WTC11 (cell line): ENCODE measurements at regions of chr9 and their contacts with region 1.

Region 1: GRCh38 chr9:114653556-114654159 is 3.9 kb downstream of the TEX53 start:
- DNase-seq: peak; percentile 81
- ATAC-seq: peak; percentile 96
- H3K4me3 Mint-ChIP-seq: no peak overlapping the region
- H3K27ac Mint-ChIP-seq: no peak overlapping the region
- H3K4me1 Mint-ChIP-seq: peaks cover 4% of the 10 kb centered on the region; the same call in 1 of the 2 replicates
- H3K27me3 Mint-ChIP-seq: no peaks in the 10 kb centered on the region; the same call in 1 of the 2 replicates
- CTCF ChIP-seq: peak; percentile 74

Region 2: DNA sequence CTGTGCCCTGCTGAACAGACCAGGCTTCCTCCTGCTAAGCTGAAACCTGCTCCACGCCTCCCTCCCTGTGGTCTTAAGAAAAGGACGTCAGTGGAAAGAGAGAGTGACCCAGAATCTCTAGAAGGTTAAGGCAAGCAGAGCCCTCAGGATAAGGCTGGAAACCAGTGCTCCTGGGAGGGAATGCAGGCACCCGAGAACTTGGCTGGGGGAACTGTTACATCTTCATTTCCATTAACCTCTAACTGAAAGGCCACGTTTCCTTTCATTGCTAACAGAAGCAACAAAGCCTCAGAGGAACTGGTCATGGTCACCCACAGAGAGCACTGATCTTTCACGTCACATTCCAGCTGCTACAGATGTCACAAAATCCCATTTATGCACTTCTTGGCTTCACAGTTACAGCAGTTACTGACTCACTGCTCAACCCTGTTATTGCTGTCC is 239.8 kb before region 1 on chr9:
- CTCF ChIA-PET with region 1: interaction called, 130 read pairs
- POLR2A ChIA-PET with region 1: no interaction called
- DNase-seq: no peak
- ATAC-seq: peak; percentile 46
- H3K4me3 Mint-ChIP-seq: no peak overlapping the region
- H3K27ac Mint-ChIP-seq: no peak overlapping the region
- H3K4me1 Mint-ChIP-seq: peaks cover 27% of the 10 kb centered on the region
- H3K27me3 Mint-ChIP-seq: no peaks in the 10 kb centered on the region
- CTCF ChIP-seq: no peak

Region 3: GRCh38 chr9:114452219-114453165 is 201.2 kb before region 1 on chr9:
- CTCF ChIA-PET with region 1: interaction called, 10 read pairs
- POLR2A ChIA-PET with region 1: no interaction called
- DNase-seq: no peak
- ATAC-seq: peak; percentile 65
- H3K4me3 Mint-ChIP-seq: no peak overlapping the region
- H3K27ac Mint-ChIP-seq: peak overlapping the region; percentile 66
- H3K4me1 Mint-ChIP-seq: peaks cover 21% of the 10 kb centered on the region
- H3K27me3 Mint-ChIP-seq: no peaks in the 10 kb centered on the region
- CTCF ChIP-seq: no peak

Region 4: GRCh38 chr9:114538241-114538640 is 115.4 kb before region 1 on chr9:
- CTCF ChIA-PET with region 1: interaction called, 47 read pairs
- POLR2A ChIA-PET with region 1: interaction called, 4 read pairs
- DNase-seq: peak; percentile 46
- ATAC-seq: peak; percentile 100
- H3K4me3 Mint-ChIP-seq: no peak overlapping the region
- H3K27ac Mint-ChIP-seq: 0 out of 2 replicates have a peak overlapping the region, but pooled peaks have one; percentile 15
- H3K4me1 Mint-ChIP-seq: peaks cover 9% of the 10 kb centered on the region
- H3K27me3 Mint-ChIP-seq: no peaks in the 10 kb centered on the region
- CTCF ChIP-seq: no peak

Region 5: DNA sequence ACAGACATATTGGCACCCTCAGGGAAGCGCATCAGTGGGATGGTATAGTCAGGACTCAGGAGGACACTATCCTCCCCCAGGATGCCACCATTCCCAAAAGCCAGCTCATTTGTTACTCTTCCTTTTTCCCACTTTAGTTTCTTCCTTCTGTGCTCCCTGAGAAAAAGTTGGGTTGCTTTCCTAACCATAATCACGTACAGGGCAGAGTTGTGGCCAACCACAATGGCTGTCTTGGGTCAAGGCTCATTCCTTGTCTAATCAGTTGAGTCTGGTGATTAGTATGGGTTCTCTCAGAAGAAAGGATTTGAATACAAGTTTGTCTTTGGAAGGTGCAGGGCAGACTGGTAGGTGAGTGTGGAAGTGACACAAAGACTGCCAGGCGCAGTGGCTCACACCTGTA is 92.7 kb before region 1 on chr9:
- CTCF ChIA-PET with region 1: no interaction called
- POLR2A ChIA-PET with region 1: no interaction called
- DNase-seq: no peak
- ATAC-seq: no peak
- H3K4me3 Mint-ChIP-seq: no peak overlapping the region
- H3K27ac Mint-ChIP-seq: peak overlapping the region; percentile 50; the same call in 1 of the 2 replicates
- H3K4me1 Mint-ChIP-seq: peaks cover 5% of the 10 kb centered on the region; the same call in 1 of the 2 replicates
- H3K27me3 Mint-ChIP-seq: no peaks in the 10 kb centered on the region
- CTCF ChIP-seq: no peak

Region 6: GRCh38 chr9:114611516-114612271 is 42.0 kb before region 1 on chr9:
- CTCF ChIA-PET with region 1: interaction called, 34 read pairs
- POLR2A ChIA-PET with region 1: no interaction called
- DNase-seq: peak; percentile 49
- ATAC-seq: peak; percentile 68
- H3K4me3 Mint-ChIP-seq: peak overlapping the region; percentile 70
- H3K27ac Mint-ChIP-seq: no peak overlapping the region
- H3K4me1 Mint-ChIP-seq: peaks cover 25% of the 10 kb centered on the region
- H3K27me3 Mint-ChIP-seq: peaks cover 22% of the 10 kb centered on the region
- CTCF ChIP-seq: no peak

Region 7: DNA sequence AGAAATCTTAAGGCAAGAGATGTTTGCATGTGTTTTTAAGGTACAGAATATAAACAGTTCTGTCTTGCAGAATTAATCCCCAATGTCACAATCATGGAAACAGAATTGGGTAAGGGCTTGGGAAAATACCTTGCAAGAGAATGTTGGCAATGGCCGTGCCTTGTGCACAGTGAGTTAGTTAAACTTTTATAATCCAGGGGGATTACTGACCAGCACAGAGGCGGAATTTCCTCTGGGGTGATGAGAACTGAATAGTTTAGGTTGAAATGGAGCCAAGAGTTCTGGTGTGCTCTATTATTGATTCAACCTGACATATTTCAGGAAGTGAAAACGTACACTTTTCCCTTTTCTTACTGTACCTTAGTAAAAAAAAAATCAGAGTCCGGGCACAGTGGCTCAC is 132.6 kb after region 1 on chr9:
- CTCF ChIA-PET with region 1: no interaction called
- POLR2A ChIA-PET with region 1: no interaction called
- DNase-seq: no peak
- ATAC-seq: no peak
- H3K4me3 Mint-ChIP-seq: no peak overlapping the region
- H3K27ac Mint-ChIP-seq: no peak overlapping the region
- H3K4me1 Mint-ChIP-seq: no peaks in the 10 kb centered on the region
- H3K27me3 Mint-ChIP-seq: peaks cover 6% of the 10 kb centered on the region
- CTCF ChIP-seq: no peak